ENCODE measurements at regions of chr12 and their contacts with region 1.

Region 1: DNA sequence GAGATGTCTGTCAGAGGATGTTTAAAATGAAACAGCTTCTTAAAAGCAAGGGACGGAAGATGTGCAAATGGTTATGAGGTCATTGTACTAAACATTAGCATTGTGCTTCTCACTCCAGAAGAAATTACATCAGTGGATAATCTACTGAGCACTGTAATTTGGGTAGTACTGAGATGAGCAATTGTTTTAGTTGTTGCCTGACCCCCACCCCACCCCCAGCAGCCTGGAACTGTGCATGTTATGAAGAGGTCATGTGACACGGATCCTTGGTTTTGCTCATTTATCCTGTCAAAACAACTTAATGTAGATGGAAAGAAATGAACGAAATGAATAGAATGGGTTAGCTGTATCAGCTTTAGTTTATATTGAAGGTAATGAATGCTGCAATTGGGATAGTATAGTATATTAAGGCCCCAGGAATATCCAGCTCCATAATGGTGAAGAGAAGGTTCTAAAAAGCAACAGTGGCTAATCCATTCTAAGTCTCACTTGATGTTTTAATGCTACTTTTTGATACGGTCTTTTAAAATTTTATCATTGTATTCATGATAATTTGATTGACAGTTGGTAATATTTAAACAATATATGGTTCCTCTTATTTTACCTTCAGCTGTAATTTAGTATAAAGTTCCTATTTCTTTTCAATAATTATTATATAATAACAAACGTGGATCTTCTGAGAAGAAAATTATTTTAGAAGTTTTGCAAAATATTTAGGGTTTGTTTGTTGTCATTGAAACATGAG is 58.5 kb downstream of the WNK1 start:
- DNase-seq: no peak
- H3K4me3 ChIP-seq: no peak overlapping the region
- H3K27ac ChIP-seq: no peak overlapping the region
- H3K4me1 ChIP-seq: no peaks in the 10 kb centered on the region
- H3K27me3 ChIP-seq: no peaks in the 10 kb centered on the region
- CTCF ChIP-seq: no peak
- POLR2A ChIP-seq: no peak

Region 2: DNA sequence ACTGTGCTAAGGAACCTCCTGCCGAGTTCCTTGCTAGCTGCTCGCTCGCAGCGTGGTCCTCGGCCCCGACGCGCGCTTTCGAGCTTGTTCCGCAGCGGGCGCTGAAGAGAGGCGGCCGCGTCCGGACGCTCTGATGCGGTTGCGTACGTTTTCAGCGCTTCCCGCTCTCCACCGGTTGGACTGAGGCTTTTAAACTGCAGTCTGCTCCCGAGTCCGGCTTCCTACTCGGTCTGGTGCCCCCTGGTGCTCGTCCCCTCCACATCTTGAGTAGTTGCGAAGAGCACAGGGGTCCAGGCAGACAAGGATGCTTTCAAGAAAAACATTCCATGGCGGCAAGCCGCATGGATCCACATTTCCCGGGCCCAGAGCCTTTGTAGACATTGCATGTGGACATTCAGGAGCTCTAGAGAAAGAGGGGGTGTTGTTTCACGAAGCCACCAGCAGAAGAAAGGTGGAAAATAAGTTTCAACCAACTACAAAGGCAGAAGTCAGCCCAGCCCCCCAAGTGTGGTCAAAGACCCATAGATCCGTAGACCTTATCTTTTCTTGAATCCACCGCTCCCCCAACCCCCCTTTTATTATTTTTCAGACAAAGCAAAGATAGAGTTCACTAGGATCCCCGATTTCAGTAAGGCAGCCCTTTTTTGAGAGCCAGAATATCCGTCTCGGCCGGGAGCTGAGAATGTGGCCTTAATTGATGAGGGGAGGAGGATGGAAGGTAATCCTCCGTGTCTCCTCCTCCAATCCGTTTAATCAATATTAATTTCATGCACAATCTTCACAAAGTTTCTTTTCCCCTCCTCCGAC is 59.4 kb before region 1 on chr12:
- intact Hi-C with region 1: loop called (anchors 5 kb)
- DNase-seq: peak; percentile 85
- H3K4me3 ChIP-seq: peak overlapping the region; percentile 92 to 96
- H3K27ac ChIP-seq: peak overlapping the region; percentile 99
- H3K4me1 ChIP-seq: peaks cover 11% of the 10 kb centered on the region
- H3K27me3 ChIP-seq: no peaks in the 10 kb centered on the region
- CTCF ChIP-seq: peak; percentile 38 to 76 (median 74)
- POLR2A ChIP-seq: peak; percentile 54

Region 3: GRCh38 chr12:1488908-1489381 is 678.1 kb after region 1 on chr12:
- intact Hi-C with region 1: no loop called
- DNase-seq: no peak
- H3K4me3 ChIP-seq: no peak overlapping the region
- H3K27ac ChIP-seq: no peak overlapping the region
- H3K4me1 ChIP-seq: no peaks in the 10 kb centered on the region
- H3K27me3 ChIP-seq: no peaks in the 10 kb centered on the region
- CTCF ChIP-seq: no peak
- POLR2A ChIP-seq: no peak